ENCODE measurements at regions of chr3 and their contacts with region 1.

Region 1: GRCh38 chr3:149771652-149772271 is 19.5 kb upstream of the COMMD2 start:
- DNase-seq: peak; percentile 39
- ATAC-seq: peak; percentile 75

Region 2: GRCh38 chr3:149494022-149494758 is 277.6 kb before region 1 on chr3:
- intact Hi-C with region 1: loop called (anchors 5 kb)
- DNase-seq: peak; percentile 55
- ATAC-seq: peak; percentile 74

Region 3: DNA sequence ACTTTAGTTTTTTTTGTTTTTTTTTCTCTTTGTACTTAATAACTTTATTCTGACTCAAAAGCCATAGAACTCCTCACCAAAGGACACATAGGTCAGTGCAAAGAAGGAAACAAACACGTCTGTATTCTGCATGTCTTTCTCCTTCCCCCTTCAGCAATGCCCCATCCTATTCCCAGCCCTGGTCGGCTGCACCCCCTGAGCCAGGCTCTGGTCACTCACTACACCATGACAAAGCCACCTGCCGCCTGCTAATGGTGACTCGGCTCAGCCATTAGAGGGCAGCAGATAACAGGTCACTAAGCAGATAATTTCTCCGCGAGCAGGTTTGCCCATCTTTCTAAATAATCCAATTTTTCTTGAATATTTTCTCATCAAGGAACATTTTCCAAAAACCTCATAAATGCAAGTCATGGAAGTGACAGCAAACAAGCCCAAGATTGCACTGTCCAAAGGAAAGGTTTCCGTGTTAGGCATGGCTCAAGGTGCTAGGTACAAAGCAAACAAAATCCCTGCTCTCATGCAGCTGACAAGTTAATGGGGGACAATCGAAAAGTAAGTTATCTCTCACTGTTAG is 259.5 kb before region 1 on chr3:
- intact Hi-C with region 1: loop called (anchors 5 kb)
- DNase-seq: peak; percentile 59
- ATAC-seq: peak; percentile 88

Measured in Right ventricle myocardium superior (tissue), 1 donor.